Activated CD4-positive, alpha-beta T cell treated with anti-CD3 and anti-CD28 coated beads for 36 hours (primary cell): ENCODE measurements at regions of chr7 and their contacts with region 1.

Region 1: DNA sequence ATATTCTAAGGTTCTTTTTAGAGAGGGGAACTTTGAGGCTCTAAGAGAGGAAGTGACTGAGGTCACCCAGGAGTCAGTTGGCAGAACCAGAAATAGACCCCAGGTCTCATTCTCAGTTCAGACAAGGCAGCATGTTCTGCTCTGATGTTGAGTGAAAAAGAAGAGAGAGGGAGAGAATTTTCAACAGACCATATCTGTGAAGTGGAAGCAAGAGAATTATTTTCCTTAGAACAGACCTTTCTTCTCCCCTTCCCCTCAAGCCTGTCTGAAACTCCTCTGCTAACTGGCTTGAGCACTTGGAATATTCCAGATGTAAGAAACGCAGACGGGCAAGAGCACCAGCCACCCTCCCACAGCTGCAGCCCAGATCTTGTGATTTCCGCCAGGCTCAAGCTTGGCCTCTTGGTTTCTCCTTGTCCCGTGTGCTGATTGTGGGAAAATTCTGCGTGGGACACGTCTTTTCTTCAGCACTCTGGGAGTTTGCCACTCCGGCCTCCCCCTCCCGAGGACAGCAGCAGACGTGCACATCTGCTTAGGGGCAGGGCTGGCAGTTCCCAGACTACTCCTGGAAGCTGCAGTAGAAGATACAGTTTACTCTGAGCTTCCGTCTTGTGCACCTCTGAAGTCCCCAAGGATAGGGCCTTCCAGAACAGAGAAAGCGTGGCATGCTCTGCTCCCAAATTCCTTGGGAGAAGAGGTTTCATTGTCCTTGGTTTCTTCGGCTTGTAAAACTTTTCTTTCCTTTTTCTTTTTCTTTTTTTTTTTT is 22.7 kb upstream of the IKZF1 start:
- DNase-seq: no peak
- ATAC-seq: peak; percentile 64
- H3K4me3 Mint-ChIP-seq: peak overlapping the region; percentile 55
- H3K27ac Mint-ChIP-seq: peak overlapping the region; percentile 85
- H3K4me1 Mint-ChIP-seq: peaks cover 64% of the 10 kb centered on the region
- H3K27me3 Mint-ChIP-seq: no peaks in the 10 kb centered on the region

Region 2: DNA sequence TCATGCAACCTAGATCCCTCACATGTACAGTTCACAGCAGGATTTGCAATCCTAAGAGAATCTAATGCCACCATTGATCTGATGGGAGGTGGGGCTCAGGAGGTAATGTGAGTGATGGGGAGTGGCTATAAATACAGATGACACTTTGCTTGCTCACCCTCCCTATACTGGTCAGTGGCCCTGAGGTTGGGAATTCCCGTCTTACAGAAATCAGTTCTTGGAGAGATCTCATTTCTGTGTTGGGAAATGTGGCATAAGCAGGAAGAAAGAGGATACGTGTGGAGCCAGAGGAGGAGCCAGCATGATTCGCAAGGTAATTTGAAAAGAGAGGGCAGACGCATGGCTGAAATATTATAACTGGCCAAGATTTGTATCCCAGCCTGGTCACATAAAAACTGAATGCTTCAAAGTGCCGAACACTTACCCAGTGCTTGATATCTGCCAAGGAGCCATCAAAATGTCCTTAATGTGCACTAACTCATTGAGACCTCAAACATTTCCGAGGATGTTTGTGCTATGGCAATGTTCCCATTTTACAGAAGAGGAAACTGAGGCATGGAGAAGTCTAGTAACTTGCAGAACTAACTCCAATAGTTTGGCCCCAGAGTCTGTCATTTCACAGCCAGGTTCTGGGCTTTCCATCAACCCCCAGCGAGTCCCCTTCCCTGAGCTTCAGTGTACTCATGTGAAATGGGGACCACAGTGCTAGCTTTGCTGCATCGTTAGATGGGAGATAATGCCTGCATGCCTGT is 17.1 kb after region 1 on chr7:
- CTCF ChIA-PET with region 1: interaction called, 11 read pairs
- POLR2A ChIA-PET with region 1: interaction called, 3 read pairs
- intact Hi-C with region 1: no loop called
- DNase-seq: no peak
- ATAC-seq: no peak
- H3K4me3 Mint-ChIP-seq: no peak overlapping the region
- H3K27ac Mint-ChIP-seq: no peak overlapping the region
- H3K4me1 Mint-ChIP-seq: peaks cover 47% of the 10 kb centered on the region
- H3K27me3 Mint-ChIP-seq: no peaks in the 10 kb centered on the region

Region 3: DNA sequence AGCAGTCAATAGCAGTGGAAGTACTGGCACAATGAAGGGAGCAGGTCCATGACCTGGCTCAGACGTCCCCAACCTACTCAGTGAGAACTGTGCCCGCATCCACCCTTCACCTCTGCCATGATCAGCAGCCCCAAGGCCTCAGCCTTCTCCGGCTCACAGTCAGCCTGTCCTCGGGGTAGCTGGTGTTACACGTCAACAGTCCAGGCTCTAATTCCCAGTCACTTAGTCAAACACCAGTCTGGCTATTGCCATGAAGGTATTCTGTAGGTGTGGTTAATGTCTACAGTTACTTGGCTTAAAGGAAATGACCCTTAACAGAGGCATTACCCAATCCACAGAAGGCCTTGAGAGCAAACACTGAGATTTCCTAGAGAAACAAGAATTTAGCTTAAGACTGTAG is 451.7 kb after region 1 on chr7:
- CTCF ChIA-PET with region 1: no interaction called
- POLR2A ChIA-PET with region 1: no interaction called
- intact Hi-C with region 1: no loop called
- DNase-seq: no peak
- ATAC-seq: no peak
- H3K4me3 Mint-ChIP-seq: no peak overlapping the region
- H3K27ac Mint-ChIP-seq: no peak overlapping the region
- H3K4me1 Mint-ChIP-seq: peaks cover 4% of the 10 kb centered on the region
- H3K27me3 Mint-ChIP-seq: no peaks in the 10 kb centered on the region